Right ventricle myocardium inferior (tissue), 1 donor: ENCODE measurements at regions of chr2 and their contacts with region 1.

Region 1: GRCh38 chr2:64914735-64915509 is 74.3 kb upstream of the SLC1A4 start:
- DNase-seq: no peak
- ATAC-seq: peak; percentile 41

Region 2: DNA sequence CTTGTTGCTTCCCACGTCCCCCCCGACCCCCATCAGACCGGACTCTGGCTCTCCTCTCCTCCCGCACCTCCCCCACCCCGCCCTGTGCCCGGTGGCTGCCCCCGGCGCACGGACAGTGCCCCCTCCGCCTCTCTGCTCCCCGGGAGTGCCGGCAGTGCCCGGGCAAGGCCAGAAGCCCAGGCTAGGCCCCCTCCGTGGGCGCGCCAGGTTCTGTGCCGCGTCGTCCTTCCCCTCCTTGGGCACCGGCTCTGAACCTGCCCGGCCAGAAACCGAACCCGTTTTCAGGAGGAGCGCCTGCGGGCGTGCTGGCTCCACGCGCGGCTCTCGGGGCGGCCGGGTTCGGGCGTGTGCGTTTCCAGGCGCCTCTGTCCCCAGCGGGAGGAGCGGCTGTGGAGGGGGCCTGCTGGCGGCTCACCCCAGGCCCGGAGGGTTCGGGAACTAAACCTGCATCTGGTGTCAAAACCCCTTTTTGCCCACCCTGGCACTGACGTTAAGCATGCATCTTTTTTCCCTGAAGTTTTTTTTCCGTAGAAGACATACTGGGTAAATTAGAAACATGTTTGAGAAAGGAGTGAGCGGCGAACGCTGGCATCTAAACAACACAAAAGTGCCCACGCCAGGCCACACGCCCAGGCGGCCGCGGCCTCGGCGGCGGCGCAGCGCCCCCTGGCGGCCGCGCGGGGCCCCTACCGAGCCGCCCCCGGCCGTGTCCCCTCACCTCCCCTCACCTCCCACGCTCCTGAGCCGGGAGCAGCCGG is 49.7 kb before region 1 on chr2:
- intact Hi-C with region 1: no loop called
- DNase-seq: peak; percentile 86
- ATAC-seq: peak; percentile 87

Region 3: DNA sequence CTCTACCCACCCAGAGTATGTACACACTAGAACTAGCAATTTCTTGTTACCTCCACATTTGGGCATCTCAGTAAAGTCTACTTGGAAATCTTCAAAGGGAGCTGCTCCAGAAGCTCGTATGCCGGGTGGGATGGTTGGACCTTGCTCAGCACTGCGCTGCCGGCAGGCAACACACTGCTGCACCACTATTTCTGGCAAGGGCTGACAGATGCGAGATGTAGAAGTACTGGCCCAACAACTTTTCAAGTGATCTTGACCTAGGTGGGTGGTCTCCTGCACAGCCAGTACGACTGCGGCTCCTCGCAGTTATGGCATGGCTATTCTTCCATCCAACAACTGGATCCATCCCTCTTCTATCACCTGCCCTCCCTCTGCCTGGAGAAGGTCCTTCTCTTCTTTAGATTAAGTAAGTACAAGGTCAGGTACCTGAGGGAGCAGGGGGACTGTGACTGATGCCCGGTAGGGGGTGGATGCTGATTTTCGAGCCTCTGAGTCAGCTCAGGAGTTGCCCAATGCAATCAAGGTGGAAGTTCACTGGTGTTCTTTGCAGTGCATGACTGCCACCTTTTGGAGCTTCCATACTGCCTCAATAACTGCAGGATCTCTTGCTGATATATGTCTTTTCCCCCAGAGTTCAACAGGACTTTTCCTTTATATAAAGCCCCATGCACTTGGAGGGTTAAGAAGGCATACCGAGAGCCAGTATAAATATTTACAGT is 26.2 kb before region 1 on chr2:
- intact Hi-C with region 1: no loop called
- DNase-seq: no peak
- ATAC-seq: no peak

Region 4: DNA sequence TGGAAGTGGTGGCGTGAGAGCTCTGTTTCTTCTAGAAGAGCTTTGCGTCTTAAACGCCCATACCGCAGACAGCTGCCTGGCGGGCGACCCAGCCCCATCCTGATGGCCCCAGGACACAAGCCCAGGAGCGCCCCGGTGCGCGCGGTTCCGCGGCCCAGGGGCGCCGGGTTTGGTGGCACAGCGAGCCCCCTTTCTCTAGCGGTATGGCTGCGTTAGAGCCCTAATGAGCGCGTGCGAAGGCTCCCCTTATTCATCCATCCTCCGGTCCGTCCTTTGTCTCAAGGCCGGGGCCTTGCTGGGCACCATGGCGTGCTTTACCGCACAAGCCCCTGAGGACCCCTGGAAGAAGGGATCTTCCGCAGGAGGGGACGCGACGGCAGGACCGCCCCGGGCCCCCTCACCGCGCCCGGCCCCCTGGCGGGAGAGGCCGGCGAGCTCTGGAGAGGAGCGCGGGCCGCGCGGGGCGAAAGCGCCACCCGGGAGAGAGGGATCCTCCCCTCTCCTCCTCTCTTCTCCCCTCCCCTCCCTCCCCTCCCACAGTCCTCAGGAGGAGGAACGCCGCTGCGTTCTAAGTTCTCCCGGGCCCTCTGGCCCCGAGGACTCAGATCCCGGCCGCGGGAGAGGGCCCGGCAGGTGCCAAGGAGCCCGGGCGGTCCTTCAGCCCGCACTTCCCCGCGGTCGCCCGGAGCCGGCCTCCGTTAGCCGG is 73.7 kb after region 1 on chr2:
- intact Hi-C with region 1: loop called (anchors 5 kb)
- DNase-seq: peak; percentile 81
- ATAC-seq: peak; percentile 81

Region 5: GRCh38 chr2:65040400-65041261 is 125.7 kb after region 1 on chr2:
- intact Hi-C with region 1: loop called (anchors 1 kb)
- DNase-seq: peak; percentile 87
- ATAC-seq: peak; percentile 98

Region 6: DNA sequence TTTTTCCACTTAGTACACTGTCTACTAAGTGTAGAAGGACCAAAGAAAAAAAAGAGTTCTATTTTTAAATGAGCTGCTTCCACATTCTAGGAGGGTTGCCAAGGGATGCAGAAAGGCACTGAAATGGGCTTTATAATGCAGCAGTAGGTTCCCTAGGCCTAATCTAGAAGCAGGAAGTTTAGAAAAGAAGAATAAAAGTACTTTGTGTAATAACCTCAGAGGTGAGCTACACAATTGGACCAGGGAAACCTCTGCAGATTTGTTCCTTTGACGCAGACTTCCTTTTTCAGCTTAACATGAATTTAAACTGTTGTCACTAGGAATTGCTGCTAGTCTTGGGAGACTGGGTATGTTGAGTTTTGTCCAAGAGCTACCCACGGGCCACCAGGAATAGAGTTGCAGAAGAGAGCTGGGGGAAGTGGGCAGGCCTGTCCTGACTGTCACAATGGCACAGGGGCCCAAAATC is 249.5 kb after region 1 on chr2:
- intact Hi-C with region 1: loop called (anchors 5 kb)
- DNase-seq: no peak
- ATAC-seq: peak; percentile 65

Region 7: GRCh38 chr2:65186872-65187851 is 272.2 kb after region 1 on chr2:
- intact Hi-C with region 1: loop called (anchors 5 kb)
- DNase-seq: peak; percentile 86
- ATAC-seq: peak; percentile 92

Region 8: DNA sequence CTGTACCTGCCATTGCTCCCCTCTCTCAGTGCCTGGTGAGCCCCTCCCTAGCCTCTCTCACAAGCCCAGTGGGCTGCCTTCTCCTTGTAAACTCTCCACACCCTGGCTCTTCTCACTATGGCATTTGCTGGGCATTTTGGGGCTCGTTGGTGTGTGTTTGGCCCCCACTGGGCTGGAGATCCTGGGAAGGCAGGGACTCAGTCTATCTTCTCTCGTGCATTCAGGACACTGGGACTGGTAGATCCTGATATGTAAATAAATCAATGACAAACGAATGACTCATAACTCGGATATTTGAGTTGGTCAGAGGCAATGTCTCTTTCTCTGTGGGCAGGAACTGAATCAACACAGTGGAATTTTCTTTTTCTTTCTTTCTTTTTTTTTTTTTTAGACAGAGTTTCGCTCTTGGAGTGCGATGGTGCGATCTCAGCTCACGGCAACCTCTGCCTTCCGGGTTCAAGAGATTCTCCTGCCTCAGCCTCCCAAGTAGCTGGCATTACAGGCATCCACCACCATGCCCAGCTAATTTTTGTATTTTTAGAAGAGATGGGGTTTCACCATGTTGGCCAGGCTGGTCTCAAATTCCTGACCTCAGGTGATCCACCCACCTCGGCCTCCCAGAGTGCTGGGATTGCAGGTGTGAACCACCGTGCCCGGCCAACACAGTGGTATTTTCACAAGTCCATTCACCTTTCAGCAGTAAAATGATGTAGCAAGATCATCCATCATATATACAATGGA is 662.1 kb after region 1 on chr2:
- intact Hi-C with region 1: loop called (anchors 10 kb)
- DNase-seq: no peak
- ATAC-seq: no peak